Panc1 (cell line): ENCODE measurements at regions of chr2 and their contacts with region 1.

Region 1: DNA sequence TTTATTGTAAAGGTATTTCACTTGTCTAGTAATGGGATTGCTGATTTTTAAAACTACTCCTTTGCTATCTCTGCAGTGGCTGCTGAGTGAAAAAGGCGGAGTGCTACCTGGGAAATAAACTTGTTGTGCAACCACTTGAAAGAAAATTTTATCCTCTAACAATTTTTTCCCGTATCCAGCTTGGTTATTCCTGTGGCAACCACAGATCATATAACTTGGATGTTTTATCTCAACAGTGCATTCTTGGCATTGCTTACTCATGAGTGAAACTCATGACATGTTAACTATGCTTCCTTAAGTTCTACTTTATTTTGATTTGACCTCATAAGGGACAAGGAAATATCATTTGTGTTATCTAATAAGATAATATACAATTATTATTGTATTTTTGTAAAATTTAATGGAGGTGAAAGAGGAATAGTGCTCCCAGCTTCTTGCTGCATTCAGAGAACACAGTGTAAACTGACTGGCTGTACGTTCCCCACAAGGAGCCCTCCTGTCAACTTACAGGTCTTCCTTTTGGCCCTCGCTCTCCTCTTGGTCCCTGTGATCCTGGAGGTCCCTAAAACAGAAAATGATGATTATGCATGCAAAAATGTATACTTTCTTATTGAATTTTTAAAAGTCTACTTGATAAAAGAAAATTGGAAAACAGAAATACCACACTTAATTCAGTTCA is 82.7 kb downstream of the COL5A2 start:
- DNase-seq: peak; percentile 22
- ATAC-seq: peak; percentile 87
- H3K4me3 ChIP-seq: no peak overlapping the region
- H3K27ac ChIP-seq: peak overlapping the region; percentile 66
- H3K4me1 ChIP-seq: peaks cover 19% of the 10 kb centered on the region; the same call in 1 of the 2 replicates
- H3K27me3 ChIP-seq: no peaks in the 10 kb centered on the region
- CTCF ChIP-seq: no peak

Region 2: DNA sequence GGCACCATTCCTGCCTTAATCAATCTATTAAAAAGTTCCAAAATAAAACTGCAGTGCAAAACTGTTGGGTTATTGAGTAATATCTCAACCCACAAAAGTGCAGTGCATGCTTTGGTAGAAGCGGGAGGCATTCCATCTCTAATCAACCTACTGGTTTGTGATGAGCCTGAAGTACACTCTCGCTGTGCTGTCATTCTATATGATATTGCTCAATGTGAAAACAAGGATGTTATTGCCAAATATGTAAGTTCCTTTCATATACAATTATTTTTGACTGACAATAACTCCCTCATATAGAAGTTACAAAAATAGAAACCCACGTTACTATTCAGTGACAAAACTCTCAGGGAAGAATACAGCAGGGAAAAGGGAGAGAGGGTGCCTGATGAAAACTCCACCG is 622.7 kb after region 1 on chr2:
- CTCF ChIA-PET with region 1: no interaction called
- POLR2A ChIA-PET with region 1: interaction called, 12 read pairs
- in situ Hi-C with region 1: no loop called
- intact Hi-C with region 1: no loop called
- DNase-seq: no peak
- ATAC-seq: no peak
- H3K4me3 ChIP-seq: no peak overlapping the region
- H3K27ac ChIP-seq: no peak overlapping the region
- H3K4me1 ChIP-seq: no peaks in the 10 kb centered on the region
- H3K27me3 ChIP-seq: no peaks in the 10 kb centered on the region
- CTCF ChIP-seq: no peak